Naive thymus-derived CD4-positive, alpha-beta T cell (primary cell): ENCODE measurements at regions of chr2 and their contacts with region 1.

Region 1: GRCh38 chr2:64750817-64751285 is 97.1 kb upstream of the SERTAD2 start:
- DNase-seq: peak in 8 of 9 donors; percentile 87 to 97 (median 96)
- ATAC-seq: peak; percentile 90
- H3K4me3 ChIP-seq: peak overlapping the region; percentile 98
- H3K4me3 Mint-ChIP-seq: peak overlapping the region; percentile 91 to 100 (median 99)
- H3K27ac ChIP-seq: peak overlapping the region; percentile 91
- H3K27ac Mint-ChIP-seq: peak overlapping the region; percentile 91 to 99 (median 96)
- H3K4me1 ChIP-seq: peaks cover 3 to 13% of the 10 kb centered on the region in 2 donors
- H3K4me1 Mint-ChIP-seq: peaks cover 5 to 34% (median 29%) of the 10 kb centered on the region in 7 donors
- H3K27me3 ChIP-seq: no peaks in the 10 kb centered on the region
- H3K27me3 Mint-ChIP-seq: no peaks in the 10 kb centered on the region

Region 2: GRCh38 chr2:64609227-64609941 is 141.5 kb before region 1 on chr2:
- CTCF ChIA-PET with region 1: interaction called, 4 read pairs
- POLR2A ChIA-PET with region 1: interaction called, 5 read pairs
- intact Hi-C with region 1: loop called (anchors 1 kb)
- DNase-seq: peak; percentile 49 to 85 (median 78)
- ATAC-seq: peak; percentile 81
- H3K4me3 ChIP-seq: peak overlapping the region; percentile 66
- H3K4me3 Mint-ChIP-seq: peak overlapping the region; percentile 61 to 86 (median 72)
- H3K27ac ChIP-seq: peak overlapping the region; percentile 64
- H3K27ac Mint-ChIP-seq: peak overlapping the region in 8 of 9 donors; percentile 51 to 82 (median 66)
- H3K4me1 ChIP-seq: peaks cover 17 to 27% of the 10 kb centered on the region in 2 donors
- H3K4me1 Mint-ChIP-seq: peaks cover 0 to 33% (median 21%) of the 10 kb centered on the region in 7 donors
- H3K27me3 ChIP-seq: no peaks in the 10 kb centered on the region
- H3K27me3 Mint-ChIP-seq: peaks cover 0 to 24% (median 0%) of the 10 kb centered on the region in 5 donors

Region 3: DNA sequence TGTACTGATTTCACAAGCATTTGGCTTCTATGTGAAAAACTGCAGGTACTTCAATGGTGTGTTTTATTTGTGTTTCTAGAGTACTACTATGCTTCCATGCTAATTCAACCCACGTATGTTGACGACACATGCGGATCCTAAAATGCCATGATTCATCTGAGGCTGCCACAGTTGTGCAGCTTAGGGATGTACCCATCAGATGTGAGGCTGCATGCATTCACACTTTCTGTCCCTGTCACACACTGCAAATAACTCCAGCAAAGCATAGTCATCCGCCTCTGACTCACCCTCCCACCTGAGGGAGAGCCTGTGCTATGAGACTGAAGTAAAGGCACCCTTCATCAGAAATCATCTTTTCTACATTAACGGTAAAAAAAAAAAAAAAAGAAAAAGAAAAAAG is 75.0 kb before region 1 on chr2:
- CTCF ChIA-PET with region 1: no interaction called
- POLR2A ChIA-PET with region 1: interaction called, 11 read pairs
- intact Hi-C with region 1: no loop called
- DNase-seq: peak in 2 of 9 donors; percentile 19 to 71
- ATAC-seq: peak; percentile 46
- H3K4me3 ChIP-seq: no peak overlapping the region
- H3K4me3 Mint-ChIP-seq: peak overlapping the region in 4 of 10 donors; percentile 4 to 35 (median 14)
- H3K27ac ChIP-seq: no peak overlapping the region
- H3K27ac Mint-ChIP-seq: peak overlapping the region in 5 of 9 donors; percentile 9 to 80 (median 59)
- H3K4me1 ChIP-seq: peaks cover 0 to 19% of the 10 kb centered on the region in 2 donors
- H3K4me1 Mint-ChIP-seq: peaks cover 9 to 88% (median 47%) of the 10 kb centered on the region in 7 donors
- H3K27me3 ChIP-seq: no peaks in the 10 kb centered on the region
- H3K27me3 Mint-ChIP-seq: no peaks in the 10 kb centered on the region

Region 4: GRCh38 chr2:64767670-64768468 is 17.0 kb after region 1 on chr2:
- CTCF ChIA-PET with region 1: interaction called, 5 read pairs
- POLR2A ChIA-PET with region 1: interaction called, 42 read pairs
- intact Hi-C with region 1: loop called (anchors 1 kb)
- DNase-seq: peak; percentile 35 to 78 (median 55)
- ATAC-seq: peak; percentile 89
- H3K4me3 ChIP-seq: peak overlapping the region; percentile 80
- H3K4me3 Mint-ChIP-seq: peak overlapping the region; percentile 90 to 99 (median 96)
- H3K27ac ChIP-seq: peak overlapping the region; percentile 73
- H3K27ac Mint-ChIP-seq: peak overlapping the region; percentile 92 to 97 (median 95)
- H3K4me1 ChIP-seq: peaks cover 3 to 12% of the 10 kb centered on the region in 2 donors
- H3K4me1 Mint-ChIP-seq: peaks cover 9 to 40% (median 23%) of the 10 kb centered on the region in 7 donors
- H3K27me3 ChIP-seq: no peaks in the 10 kb centered on the region
- H3K27me3 Mint-ChIP-seq: peaks cover 0 to 15% (median 0%) of the 10 kb centered on the region in 5 donors

Region 5: GRCh38 chr2:64988420-64989125 is 237.7 kb after region 1 on chr2:
- CTCF ChIA-PET with region 1: no interaction called
- POLR2A ChIA-PET with region 1: no interaction called
- intact Hi-C with region 1: loop called in 1 of 2 experiments (anchors 5 kb)
- DNase-seq: peak; percentile 17 to 70 (median 39)
- ATAC-seq: peak; percentile 47
- H3K4me3 ChIP-seq: peak overlapping the region; percentile 76
- H3K4me3 Mint-ChIP-seq: peak overlapping the region; percentile 80 to 92 (median 86)
- H3K27ac ChIP-seq: no peak overlapping the region
- H3K27ac Mint-ChIP-seq: peak overlapping the region in 4 of 9 donors; percentile 40 to 73 (median 44)
- H3K4me1 ChIP-seq: peaks cover 0 to 8% of the 10 kb centered on the region in 2 donors
- H3K4me1 Mint-ChIP-seq: peaks cover 16 to 62% (median 24%) of the 10 kb centered on the region in 7 donors
- H3K27me3 ChIP-seq: no peaks in the 10 kb centered on the region
- H3K27me3 Mint-ChIP-seq: peaks cover 0 to 33% (median 4%) of the 10 kb centered on the region in 5 donors